Activated CD4-positive, alpha-beta T cell treated with anti-CD3 and anti-CD28 coated beads, Interleukin-2, amount 10 ng/mL, durations not matched to agents 7 days and 5 days (primary cell): ENCODE measurements at regions of chr7 and their contacts with region 1.

Region 1: DNA sequence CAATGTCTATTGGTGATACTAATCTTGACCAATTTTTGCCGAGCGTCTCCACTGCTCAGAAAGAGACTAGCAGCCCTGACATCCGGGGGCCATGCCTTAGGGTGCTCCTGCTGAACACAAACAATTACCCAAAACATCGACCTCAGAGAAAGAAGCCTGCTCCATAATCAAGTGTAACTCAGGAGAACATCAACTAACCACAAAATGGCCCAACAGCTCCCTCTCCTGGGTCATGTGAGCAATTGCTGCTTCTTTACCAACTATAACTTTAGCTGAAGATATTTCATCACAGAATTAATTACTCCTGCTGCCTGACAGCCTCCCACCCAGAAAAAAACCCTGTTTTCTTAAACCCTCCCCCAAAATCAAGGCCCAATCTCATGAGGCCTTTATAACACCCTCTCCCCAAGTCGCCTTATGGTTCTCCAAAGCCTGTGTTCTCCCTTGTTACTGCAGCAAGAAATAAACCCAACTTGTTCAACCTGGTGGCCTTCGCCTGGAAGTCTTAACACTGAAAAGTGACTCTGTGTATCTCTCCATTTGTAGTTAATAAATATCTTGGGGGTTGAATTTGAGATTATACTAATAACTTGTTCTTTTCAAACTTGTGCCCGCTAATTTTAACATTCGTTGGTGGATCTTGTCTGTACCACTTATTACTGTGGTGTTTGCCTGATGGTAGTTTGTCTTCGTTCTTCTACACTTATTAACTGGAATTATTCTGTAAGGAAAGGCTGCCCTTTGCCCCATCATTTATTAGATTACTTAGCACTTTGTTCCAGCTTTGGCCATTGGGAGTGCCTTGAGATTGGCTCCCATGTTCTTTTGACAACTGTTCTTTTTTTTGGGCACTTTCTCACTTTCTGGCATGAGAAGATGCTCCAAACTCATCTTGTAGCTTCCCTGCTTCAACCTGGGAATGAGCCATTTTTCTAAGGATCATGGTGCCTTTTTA is 21.2 kb upstream of the RAMP3 start:
- DNase-seq: peak; percentile 83
- H3K4me3 Mint-ChIP-seq: no peak overlapping the region
- H3K27ac Mint-ChIP-seq: peak overlapping the region; percentile 42
- H3K4me1 Mint-ChIP-seq: peaks cover 27% of the 10 kb centered on the region
- H3K27me3 Mint-ChIP-seq: peaks cover 3% of the 10 kb centered on the region

Region 2: GRCh38 chr7:44858161-44858560 is 278.2 kb before region 1 on chr7:
- CTCF ChIA-PET with region 1: interaction called, 15 read pairs
- POLR2A ChIA-PET with region 1: no interaction called
- DNase-seq: no peak
- H3K4me3 Mint-ChIP-seq: no peak overlapping the region
- H3K27ac Mint-ChIP-seq: peak overlapping the region; percentile 60
- H3K4me1 Mint-ChIP-seq: peaks cover 15% of the 10 kb centered on the region
- H3K27me3 Mint-ChIP-seq: peaks cover 3% of the 10 kb centered on the region

Region 3: DNA sequence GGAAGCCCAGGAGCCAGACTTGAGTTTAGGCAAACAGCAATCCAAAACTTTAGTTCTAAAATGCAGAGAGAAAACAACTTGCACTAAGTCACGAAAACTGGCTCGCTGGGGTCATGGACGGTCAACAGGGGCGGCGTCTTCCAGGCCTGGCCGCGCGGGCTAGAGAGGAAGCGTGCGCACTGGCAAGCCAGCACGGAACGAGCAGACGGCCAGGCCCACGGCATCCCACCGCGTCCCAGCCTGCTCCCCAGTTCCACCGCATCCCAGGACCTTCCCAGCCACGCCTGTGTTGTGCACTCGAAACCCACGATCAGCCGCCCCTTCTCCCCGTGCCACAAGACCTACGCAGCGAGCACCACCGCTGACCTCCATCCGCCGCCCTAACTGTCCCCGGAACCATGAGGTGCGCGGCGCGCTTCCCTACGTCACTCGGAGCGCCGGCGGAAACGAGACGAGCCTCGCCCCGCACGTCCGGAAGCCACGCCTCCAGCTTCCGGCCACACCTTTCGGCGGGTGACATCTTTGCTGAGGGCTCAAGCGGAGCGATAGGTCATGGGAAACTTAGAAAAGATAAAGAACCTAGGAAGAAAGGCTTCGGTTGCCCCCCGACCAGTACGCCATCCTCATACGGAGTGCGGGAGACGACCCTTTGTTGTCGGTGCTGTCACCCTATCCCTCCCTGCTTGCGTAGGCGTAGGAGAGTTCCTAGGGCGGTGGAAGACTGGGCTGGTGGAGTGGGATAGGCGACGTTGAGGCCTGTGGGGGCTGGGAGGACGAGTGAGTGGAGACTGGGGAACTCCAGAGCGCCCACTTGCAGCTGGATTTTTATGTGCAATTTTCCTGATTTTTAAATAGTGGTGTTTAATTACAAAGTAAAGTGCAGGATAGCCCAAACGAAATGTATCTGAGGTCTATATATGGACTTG is 24.8 kb before region 1 on chr7 and contains the start of gene TBRG4:
- CTCF ChIA-PET with region 1: interaction called, 17 read pairs
- POLR2A ChIA-PET with region 1: interaction called, 10 read pairs
- DNase-seq: peak; percentile 95
- H3K4me3 Mint-ChIP-seq: peak within 1 kb of the TSS; percentile 82
- H3K27ac Mint-ChIP-seq: peak within 1 kb of the TSS; percentile 94
- H3K4me1 Mint-ChIP-seq: peaks cover 41% of the 10 kb centered on the region
- H3K27me3 Mint-ChIP-seq: peaks cover 20% of the 10 kb centered on the region
- total RNA-seq, gene TBRG4: 98.9 to 102 TPM

Region 4: GRCh38 chr7:45122975-45123860 is 13.2 kb before region 1 on chr7:
- CTCF ChIA-PET with region 1: interaction called, 15 read pairs
- POLR2A ChIA-PET with region 1: no interaction called
- DNase-seq: no peak
- H3K4me3 Mint-ChIP-seq: peak overlapping the region; percentile 1
- H3K27ac Mint-ChIP-seq: peak overlapping the region; percentile 93
- H3K4me1 Mint-ChIP-seq: peaks cover 22% of the 10 kb centered on the region
- H3K27me3 Mint-ChIP-seq: no peaks in the 10 kb centered on the region

Region 5: DNA sequence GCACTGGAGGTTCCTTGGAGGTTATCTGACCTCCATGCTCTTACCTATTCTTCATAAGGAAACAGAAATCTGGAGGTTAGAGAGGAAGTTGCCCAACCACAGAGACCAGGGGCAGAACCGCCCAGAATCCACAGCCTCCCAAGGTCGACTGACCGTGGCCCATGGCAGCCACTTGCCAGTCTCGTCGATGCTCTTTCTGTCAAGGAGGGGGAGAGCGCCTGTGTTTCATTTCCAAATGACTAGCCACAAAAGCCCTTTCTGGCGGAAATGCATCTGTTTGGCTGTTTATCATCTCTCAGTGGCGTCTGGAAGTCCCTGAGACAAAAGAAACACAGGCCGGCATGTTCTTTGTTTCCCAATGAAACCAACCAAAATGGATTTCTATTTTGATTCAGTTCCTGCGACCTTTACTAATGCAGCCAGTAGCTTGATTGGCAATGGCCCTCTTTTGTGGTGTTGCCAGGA is 24.1 kb after region 1 on chr7:
- CTCF ChIA-PET with region 1: no interaction called
- POLR2A ChIA-PET with region 1: no interaction called
- DNase-seq: no peak
- H3K4me3 Mint-ChIP-seq: no peak overlapping the region
- H3K27ac Mint-ChIP-seq: no peak overlapping the region
- H3K4me1 Mint-ChIP-seq: peaks cover 14% of the 10 kb centered on the region
- H3K27me3 Mint-ChIP-seq: peaks cover 29% of the 10 kb centered on the region